ENCODE measurements at regions of chr2 and their contacts with region 1.

Region 1: DNA sequence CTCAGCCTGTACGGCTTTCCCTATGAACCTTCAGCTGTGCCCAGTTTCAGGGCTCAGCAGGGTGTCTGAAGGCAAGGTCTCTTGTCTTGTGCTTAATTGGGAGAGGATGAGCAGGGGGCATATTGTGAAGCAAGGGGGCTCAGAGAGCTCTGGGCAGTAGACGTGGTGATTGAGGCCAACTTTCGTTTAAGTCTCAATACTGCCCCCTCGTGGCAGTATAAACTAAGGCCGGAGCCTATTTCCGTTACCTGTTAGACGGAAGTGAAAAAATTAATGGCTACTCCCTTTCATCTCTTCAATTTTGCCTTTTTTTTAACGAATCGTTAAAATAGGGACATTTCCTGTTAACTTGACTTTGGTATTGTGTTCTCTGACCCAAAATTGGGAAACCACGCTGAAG is 193.4 kb downstream of the TDRD15 start:
- DNase-seq: peak in 4 of 14 experiments; percentile 4 to 43 (median 24)
- ATAC-seq: no peak
- H3K4me3 ChIP-seq: no peak overlapping the region
- H3K4me3 Mint-ChIP-seq: no peak overlapping the region
- H3K27ac ChIP-seq: no peak overlapping the region
- H3K27ac Mint-ChIP-seq: no peak overlapping the region
- H3K4me1 ChIP-seq: no peaks in the 10 kb centered on the region
- H3K4me1 Mint-ChIP-seq: no peaks in the 10 kb centered on the region
- H3K27me3 ChIP-seq: no peaks in the 10 kb centered on the region
- H3K27me3 Mint-ChIP-seq: no peaks in the 10 kb centered on the region
- CTCF ChIP-seq: peak; percentile 9

Region 2: DNA sequence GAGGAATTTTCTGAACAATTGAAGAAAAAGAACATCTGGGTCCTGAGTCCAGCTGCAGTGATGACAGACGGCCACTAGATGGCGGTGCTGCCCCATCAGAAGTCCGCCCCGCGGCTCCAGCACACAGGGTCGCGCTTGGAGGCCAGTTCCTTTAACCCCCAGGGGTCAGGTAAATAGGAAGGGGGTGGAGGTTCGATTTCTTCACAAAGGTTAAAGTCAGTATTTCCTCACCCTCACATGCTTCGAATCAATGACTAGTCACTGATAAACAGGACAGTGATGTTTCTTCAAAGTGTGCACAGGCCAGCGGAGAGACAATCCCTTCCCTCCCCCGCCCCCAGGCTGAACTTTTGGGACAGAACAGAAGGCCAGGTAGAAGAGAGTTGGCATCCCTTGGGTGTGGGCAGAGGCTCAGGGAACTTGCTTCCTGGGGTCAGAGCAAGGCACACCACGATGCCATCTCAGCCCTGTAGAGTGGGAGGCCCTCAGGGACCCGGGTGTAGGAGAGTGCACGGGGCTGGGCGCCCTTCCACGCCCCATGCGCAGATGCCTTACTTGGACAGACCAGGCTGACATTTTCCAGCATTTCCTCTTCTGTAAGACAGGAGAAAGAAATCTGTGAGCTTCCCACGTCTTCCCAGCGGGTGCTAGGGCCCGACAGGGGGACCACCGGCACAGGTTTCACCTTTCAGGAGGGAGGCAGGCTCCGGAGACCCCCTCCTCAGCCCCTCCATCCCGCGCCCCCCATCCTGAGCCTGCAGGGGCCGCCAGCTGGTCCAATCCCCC is 274.0 kb before region 1 on chr2:
- CTCF ChIA-PET with region 1: no interaction called
- POLR2A ChIA-PET with region 1: no interaction called
- intact Hi-C with region 1: loop called in 1 of 2 experiments (anchors 5 kb)
- DNase-seq: peak; percentile 17 to 72 (median 42)
- ATAC-seq: peak; percentile 55
- H3K4me3 ChIP-seq: no peak overlapping the region
- H3K4me3 Mint-ChIP-seq: peak overlapping the region; percentile 8
- H3K27ac ChIP-seq: no peak overlapping the region
- H3K27ac Mint-ChIP-seq: no peak overlapping the region
- H3K4me1 ChIP-seq: peaks cover 6% of the 10 kb centered on the region
- H3K4me1 Mint-ChIP-seq: peaks cover 5% of the 10 kb centered on the region
- H3K27me3 ChIP-seq: peaks cover 15 to 25% of the 10 kb centered on the region in 2 experiments
- H3K27me3 Mint-ChIP-seq: peaks cover 68% of the 10 kb centered on the region
- CTCF ChIP-seq: peak; percentile 98

Region 3: DNA sequence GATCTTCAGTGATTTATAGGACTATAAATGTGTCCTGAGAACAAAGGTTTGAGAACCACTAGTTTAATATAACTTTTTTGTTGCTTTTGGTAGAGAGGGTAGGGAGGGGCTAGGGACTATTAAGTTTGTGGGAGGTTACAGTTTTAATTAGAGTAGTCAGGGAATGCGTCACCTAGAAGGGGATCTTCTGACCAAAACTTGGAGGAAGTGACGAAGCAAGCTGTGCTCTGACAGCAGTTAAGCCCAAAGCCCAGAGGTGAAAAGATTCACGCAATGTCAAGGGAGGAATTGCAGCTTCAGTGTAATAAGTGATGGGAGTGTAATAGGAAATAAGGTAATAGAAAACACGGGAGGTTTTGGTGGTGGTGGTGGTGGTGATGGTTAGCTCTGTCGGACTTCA is 185.3 kb before region 1 on chr2:
- CTCF ChIA-PET with region 1: no interaction called
- POLR2A ChIA-PET with region 1: no interaction called
- intact Hi-C with region 1: no loop called
- DNase-seq: no peak
- ATAC-seq: no peak
- H3K4me3 ChIP-seq: no peak overlapping the region
- H3K4me3 Mint-ChIP-seq: no peak overlapping the region
- H3K27ac ChIP-seq: no peak overlapping the region
- H3K27ac Mint-ChIP-seq: no peak overlapping the region
- H3K4me1 ChIP-seq: no peaks in the 10 kb centered on the region
- H3K4me1 Mint-ChIP-seq: no peaks in the 10 kb centered on the region
- H3K27me3 ChIP-seq: peaks cover 0 to 5% of the 10 kb centered on the region in 2 experiments
- H3K27me3 Mint-ChIP-seq: no peaks in the 10 kb centered on the region
- CTCF ChIP-seq: no peak